H1 (cell line): ENCODE measurements at regions of chr3 and their contacts with region 1.

Region 1: DNA sequence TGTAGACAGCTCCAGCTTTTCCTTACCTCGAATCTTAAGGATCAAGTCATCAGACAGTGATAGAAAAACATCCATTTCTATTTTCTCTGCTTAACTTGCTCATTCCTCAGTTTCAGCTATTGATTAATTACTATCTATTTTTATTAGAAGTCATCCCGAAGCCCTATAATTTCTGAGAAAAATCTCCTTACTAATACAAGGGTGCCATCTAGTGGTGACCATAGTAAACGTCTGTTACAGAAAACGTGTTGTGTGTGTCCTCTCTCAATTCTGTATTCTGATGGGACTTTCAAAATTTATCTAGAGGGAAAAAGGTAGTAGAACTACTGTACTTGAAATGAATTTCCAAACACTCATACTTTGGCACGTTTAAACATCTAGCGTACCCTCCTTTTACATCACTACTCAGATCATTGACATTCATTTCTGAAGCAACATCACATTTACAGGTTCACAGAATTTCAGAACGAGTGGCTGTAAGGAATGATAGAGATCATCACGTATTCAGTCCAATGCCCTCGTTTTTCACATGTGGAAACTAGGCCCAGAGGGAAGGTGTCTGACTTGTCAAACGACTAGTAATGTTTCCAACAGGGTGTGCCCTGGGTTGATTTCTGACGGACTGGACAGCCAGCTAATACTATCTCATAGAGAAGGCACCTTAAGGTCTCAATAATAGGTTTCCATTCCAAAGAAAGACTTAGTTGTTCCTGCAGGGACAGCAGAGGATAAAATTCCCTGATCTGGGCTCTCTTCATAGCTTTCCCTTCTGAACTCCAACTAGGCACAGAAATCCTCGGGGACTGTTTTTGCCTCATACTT is 25.6 kb downstream of the HACD2 start:
- DNase-seq: no peak
- H3K4me3 ChIP-seq: no peak overlapping the region
- H3K27ac ChIP-seq: no peak overlapping the region
- H3K4me1 ChIP-seq: no peaks in the 10 kb centered on the region
- H3K27me3 ChIP-seq: no peaks in the 10 kb centered on the region
- CTCF ChIP-seq: peak in 2 of 3 experiments; percentile 35 to 59; a peak in 2 of 4 replicates
- EP300 ChIP-seq: no peak
- POLR2A ChIP-seq: no peak
- RAD21 ChIP-seq: peak; percentile 66 to 67

Region 2: GRCh38 chr3:123489400-123490004 is 69.7 kb before region 1 on chr3:
- CTCF ChIA-PET with region 1: interaction called, 13 read pairs
- POLR2A ChIA-PET with region 1: no interaction called
- DNase-seq: peak; percentile 62 to 96
- H3K4me3 ChIP-seq: no peak overlapping the region
- H3K27ac ChIP-seq: no peak overlapping the region
- H3K4me1 ChIP-seq: no peaks in the 10 kb centered on the region
- H3K27me3 ChIP-seq: no peaks in the 10 kb centered on the region
- CTCF ChIP-seq: peak; percentile 85 to 95 (median 93)
- EP300 ChIP-seq: no peak
- POLR2A ChIP-seq: no peak
- RAD21 ChIP-seq: peak; percentile 99

Region 3: DNA sequence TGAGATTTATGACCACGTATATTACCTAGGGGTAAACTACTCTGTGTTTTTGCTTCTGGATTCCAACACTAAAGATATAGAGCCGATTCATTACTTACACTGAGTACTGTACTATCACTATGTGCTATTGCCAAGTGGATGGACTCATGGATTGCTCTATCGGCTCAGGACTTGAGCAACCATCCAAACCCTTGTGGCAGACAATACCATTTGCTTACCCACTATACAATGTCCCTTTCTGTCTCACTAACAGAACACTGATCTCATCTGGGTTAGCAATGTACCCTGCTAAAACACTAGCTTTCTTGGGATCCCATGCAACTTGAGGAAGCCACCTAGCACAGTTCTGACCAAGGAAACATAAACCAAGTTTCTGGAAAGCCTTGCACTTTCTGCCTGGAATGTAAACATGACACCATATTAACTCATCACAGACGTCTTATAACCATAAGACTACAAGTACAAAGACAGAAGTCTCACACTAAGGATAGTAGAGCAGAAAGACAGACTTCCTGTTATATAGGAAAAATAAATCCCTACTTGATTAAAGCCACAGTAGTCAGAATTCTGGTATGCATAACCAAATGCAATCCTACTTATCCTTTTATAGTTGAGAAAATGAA is 13.0 kb before region 1 on chr3:
- CTCF ChIA-PET with region 1: interaction called, 23 read pairs
- POLR2A ChIA-PET with region 1: no interaction called
- DNase-seq: no peak
- H3K4me3 ChIP-seq: no peak overlapping the region
- H3K27ac ChIP-seq: no peak overlapping the region
- H3K4me1 ChIP-seq: no peaks in the 10 kb centered on the region
- H3K27me3 ChIP-seq: no peaks in the 10 kb centered on the region
- CTCF ChIP-seq: no peak
- EP300 ChIP-seq: no peak
- POLR2A ChIP-seq: no peak
- RAD21 ChIP-seq: no peak

Region 4: DNA sequence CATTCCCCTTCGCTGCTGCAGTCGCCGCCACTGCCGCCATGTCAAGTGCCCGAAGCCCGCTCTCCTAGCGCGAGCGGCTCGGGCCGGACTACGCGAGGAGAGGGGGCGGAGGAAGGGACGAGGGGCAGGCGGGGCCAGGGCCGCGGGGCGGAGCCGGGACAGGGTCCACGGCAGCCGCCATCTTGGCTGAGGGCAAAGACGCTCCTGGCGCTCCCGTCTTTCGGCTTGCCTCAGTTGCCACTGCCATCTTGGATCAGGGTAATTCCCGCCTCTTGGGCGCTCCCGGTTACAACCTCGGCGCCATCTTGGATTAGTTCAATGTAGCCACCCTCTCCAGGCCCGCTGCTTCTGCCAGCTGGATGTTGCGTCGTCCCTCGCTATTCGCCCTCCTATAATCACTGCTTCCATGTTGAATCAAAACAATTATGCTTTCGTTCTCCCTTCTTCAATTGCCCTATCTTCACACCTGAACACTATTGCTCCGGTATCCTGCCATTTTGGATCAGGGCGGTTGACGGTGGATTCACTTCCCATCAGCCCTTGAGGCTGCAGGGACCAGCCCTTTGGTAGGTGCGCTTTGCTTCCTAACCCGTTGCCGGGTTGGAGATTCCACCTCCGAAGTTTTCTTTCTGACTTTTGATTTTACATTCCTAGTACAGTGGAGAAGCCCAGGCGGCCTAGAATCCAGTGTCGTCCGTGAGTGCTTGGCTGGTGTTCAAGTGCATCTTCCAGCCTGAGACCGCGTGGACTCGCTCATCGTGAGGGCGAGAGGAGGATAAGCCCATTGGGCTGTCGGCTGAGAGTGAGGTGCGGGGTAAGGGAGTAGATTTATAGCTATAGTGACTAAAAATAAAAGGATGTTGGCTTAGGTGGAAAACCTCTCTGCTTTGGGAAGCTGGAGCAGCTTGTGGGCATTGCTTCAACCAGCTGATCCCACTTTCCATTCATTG is 26.0 kb after region 1 on chr3 and contains the start of gene HACD2:
- CTCF ChIA-PET with region 1: interaction called, 16 read pairs
- POLR2A ChIA-PET with region 1: no interaction called
- DNase-seq: peak; percentile 95
- H3K4me3 ChIP-seq: peak within 1 kb of the TSS; percentile 80 to 99 (median 88)
- H3K27ac ChIP-seq: peak within 1 kb of the TSS; percentile 100
- H3K4me1 ChIP-seq: peaks cover 0 to 3% (median 0%) of the 10 kb centered on the region in 4 experiments; a peak in 3 of 7 replicates
- H3K27me3 ChIP-seq: no peaks in the 10 kb centered on the region
- CTCF ChIP-seq: no peak
- EP300 ChIP-seq: no peak
- POLR2A ChIP-seq: peak; percentile 70 to 78; a peak in 2 of 3 replicates
- RAD21 ChIP-seq: no peak
- total RNA-seq, gene HACD2: 29.8 and 31.2 TPM in 2 replicates

Region 5: DNA sequence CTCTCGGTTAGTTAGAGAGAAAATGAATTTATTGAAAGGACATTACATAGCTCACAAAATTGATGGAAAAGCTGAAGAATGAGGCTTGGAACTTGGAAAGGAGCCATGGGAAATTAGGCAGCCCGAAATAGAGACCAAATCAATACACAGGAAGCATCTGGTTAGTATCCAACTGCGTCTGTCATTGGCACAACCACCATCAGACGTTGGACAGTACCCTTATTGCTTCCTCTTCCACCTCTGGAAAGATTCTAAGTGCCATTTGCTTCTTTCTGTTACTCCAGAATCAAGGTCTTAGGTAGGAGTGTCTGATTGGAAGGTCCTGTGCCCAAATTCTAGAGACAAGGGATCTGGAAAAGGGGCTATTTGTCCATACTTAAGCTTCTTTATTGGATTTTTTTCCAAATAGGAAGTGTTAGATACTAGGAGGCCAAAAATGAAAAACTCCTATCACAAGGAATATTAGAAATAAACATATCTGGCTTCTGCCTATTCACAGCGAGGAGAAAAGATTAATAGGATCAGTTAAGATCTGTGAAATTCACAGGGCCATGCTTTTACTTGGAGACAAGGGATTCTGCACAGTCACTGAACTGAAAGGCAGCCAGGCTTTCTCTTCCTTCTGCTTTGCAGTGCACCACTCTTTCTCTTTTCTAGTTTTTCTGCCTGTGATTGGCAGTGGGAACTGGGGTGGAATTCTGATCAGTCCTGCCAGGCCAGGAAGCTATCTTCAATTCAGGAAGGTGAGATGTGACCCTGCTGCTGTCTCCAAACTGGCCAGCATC is 36.3 kb after region 1 on chr3:
- CTCF ChIA-PET with region 1: no interaction called
- POLR2A ChIA-PET with region 1: no interaction called
- DNase-seq: no peak
- H3K4me3 ChIP-seq: no peak overlapping the region
- H3K27ac ChIP-seq: no peak overlapping the region
- H3K4me1 ChIP-seq: no peaks in the 10 kb centered on the region
- H3K27me3 ChIP-seq: no peaks in the 10 kb centered on the region
- CTCF ChIP-seq: no peak
- EP300 ChIP-seq: no peak
- POLR2A ChIP-seq: no peak
- RAD21 ChIP-seq: no peak

Region 6: GRCh38 chr3:123834631-123835030 is 275.4 kb after region 1 on chr3:
- CTCF ChIA-PET with region 1: no interaction called
- POLR2A ChIA-PET with region 1: no interaction called
- DNase-seq: no peak
- H3K4me3 ChIP-seq: no peak overlapping the region
- H3K27ac ChIP-seq: no peak overlapping the region
- H3K4me1 ChIP-seq: no peaks in the 10 kb centered on the region
- H3K27me3 ChIP-seq: no peaks in the 10 kb centered on the region
- CTCF ChIP-seq: no peak
- EP300 ChIP-seq: no peak
- POLR2A ChIP-seq: no peak
- RAD21 ChIP-seq: no peak

Region 7: GRCh38 chr3:123893012-123893411 is 333.8 kb after region 1 on chr3:
- CTCF ChIA-PET with region 1: no interaction called
- POLR2A ChIA-PET with region 1: no interaction called
- DNase-seq: no peak
- H3K4me3 ChIP-seq: no peak overlapping the region
- H3K27ac ChIP-seq: no peak overlapping the region
- H3K4me1 ChIP-seq: no peaks in the 10 kb centered on the region
- H3K27me3 ChIP-seq: no peaks in the 10 kb centered on the region
- CTCF ChIP-seq: no peak
- EP300 ChIP-seq: no peak
- POLR2A ChIP-seq: no peak
- RAD21 ChIP-seq: no peak